Common myeloid progenitor, CD34-positive (primary cell): ENCODE measurements at regions of chr11 and their contacts with region 1.

Region 1: DNA sequence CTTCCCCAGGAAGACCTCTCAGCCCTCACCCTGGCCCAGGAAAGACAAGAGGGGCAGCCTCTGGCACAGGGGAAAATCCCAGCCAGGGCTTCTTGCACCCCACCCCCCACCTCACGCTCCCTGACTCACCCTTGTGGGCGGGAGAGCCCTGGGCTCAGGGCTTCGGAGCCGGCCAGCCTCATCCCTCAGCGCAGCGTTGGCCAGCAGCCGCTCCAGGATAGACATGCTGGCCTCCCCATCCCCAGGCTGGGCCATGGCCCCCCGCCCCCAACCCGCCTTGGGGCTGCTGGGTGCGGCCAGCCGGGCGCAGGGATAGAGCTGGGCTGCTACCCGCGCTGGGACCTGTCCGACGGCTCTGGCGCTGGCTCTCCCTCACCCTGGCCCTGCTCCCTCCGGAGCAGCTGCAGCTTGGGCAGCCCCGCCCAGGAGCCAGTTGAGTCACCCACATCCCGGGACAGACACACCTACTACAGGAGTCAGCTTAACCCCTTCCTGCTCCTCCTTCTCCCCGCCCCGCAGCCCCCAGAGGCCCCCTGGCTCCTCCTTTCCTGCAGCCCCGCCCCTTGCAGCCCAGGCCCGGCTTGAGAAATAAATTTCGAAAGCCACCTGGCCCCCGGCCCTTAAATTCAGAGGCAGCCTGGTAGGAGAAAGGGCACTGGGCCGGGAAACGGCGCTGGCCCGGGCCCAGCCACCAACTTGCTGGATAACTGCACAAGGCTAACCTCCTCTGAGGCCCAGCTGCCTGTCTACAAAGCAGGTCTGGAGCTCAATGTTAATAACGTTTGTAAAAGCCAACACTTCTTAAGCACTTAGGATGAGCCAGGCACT is 13.4 kb downstream of the TNKS1BP1 start:
- DNase-seq: peak; percentile 76 to 82 (median 79)
- H3K4me3 ChIP-seq: peak overlapping the region in 6 of 7 experiments; percentile 42 to 76 (median 52)
- H3K27ac ChIP-seq: no peak overlapping the region
- H3K4me1 ChIP-seq: peaks cover 9 to 47% (median 30%) of the 10 kb centered on the region in 4 experiments
- H3K27me3 ChIP-seq: no peaks in the 10 kb centered on the region

Region 2: DNA sequence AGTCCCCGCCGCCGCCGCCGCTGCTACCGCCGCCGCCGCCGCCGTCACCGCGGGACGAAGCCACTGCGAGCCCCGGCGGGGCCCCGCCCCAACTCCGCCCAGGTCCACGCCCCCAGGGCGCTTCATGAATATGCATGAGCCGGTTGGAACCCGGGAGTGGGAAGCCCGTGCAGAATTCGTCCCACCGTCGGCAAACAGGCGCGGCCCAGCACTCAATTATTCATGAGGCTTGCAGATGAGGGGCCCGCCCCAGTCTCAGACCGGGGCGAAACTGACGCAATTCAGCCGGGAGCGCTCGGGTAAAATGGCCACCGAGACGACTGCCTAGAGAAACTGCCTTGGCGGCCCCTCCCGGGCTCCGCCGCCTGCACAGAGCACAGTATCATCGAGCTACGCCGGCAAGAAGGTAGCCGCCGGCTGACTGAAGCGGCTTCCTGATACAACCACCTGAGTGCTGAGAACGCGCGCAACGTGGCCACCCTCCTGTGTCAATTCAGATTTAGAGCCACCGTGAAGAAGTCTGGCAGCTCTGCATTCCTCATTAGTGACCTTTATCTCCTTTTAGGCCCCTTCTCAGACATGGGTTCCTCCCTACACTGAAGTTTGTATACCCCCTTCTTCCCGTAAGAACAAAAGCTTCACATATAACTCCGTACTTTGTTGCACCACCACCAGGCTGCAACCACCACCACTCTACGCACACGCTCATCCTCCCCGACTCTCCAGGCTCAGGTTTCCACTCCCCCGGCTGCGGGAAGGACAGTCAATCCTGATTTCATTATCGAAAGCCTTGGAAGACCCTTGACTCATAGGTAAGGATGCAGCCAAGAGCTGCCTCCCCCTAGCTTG is 13.8 kb after region 1 on chr11 and contains the start of gene TNKS1BP1:
- CTCF ChIA-PET with region 1: interaction called, 15 read pairs
- POLR2A ChIA-PET with region 1: no interaction called
- DNase-seq: peak; percentile 90 to 95 (median 92)
- H3K4me3 ChIP-seq: peak within 1 kb of the TSS; percentile 56 to 90 (median 74)
- H3K27ac ChIP-seq: peak within 1 kb of the TSS; percentile 58 to 86
- H3K4me1 ChIP-seq: peaks cover 2 to 36% (median 26%) of the 10 kb centered on the region in 4 experiments
- H3K27me3 ChIP-seq: no peaks in the 10 kb centered on the region